ENCODE measurements at regions of chr5 and their contacts with region 1.

Region 1: DNA sequence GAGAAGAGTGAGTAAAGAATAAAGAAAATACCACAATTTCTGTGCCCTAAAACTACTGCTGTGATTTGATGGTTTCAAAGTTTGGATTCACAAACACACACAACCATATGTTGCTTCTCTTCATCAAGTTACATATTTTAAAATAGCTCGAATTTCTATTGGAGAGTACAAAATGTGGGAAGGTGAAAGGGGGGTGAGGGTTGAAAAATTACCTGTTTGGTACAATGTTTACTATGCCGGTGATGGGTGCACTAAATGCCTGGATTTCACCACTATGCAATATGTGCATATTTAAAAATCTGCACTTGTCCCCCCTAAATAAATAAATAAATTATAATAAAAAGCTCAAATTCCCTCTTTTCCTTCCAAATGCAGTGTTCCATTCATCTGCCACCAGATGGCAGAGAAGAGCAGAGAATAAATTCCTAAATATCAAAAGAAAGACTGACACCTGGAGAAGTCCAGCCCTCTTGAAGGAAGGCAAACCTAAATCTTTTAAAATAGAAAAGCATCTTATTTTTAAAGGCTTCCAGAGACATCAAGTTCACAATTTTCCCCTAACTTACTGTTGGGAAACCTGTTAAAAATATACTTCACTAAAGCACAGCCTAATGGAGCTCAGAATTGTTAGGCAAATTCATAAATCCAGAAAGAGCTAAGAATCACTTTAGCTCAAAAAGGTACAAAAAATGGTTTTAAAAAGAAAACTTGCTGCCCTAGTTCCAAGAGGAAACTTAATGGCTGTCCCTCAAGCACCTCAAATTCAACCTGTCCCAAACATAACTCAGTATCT is 24.8 kb upstream of the HNRNPA0 start:
- DNase-seq: no peak
- H3K4me3 Mint-ChIP-seq: no peak overlapping the region
- H3K27ac Mint-ChIP-seq: no peak overlapping the region
- H3K4me1 Mint-ChIP-seq: no peaks in the 10 kb centered on the region
- H3K27me3 Mint-ChIP-seq: peaks cover 1% of the 10 kb centered on the region

Region 2: GRCh38 chr5:137629646-137630045 is 149.3 kb before region 1 on chr5:
- CTCF ChIA-PET with region 1: interaction called, 10 read pairs
- POLR2A ChIA-PET with region 1: no interaction called
- intact Hi-C with region 1: no loop called
- DNase-seq: no peak
- H3K4me3 Mint-ChIP-seq: no peak overlapping the region
- H3K27ac Mint-ChIP-seq: no peak overlapping the region
- H3K4me1 Mint-ChIP-seq: no peaks in the 10 kb centered on the region
- H3K27me3 Mint-ChIP-seq: no peaks in the 10 kb centered on the region

Region 3: GRCh38 chr5:137760330-137761188 is 18.4 kb before region 1 on chr5:
- CTCF ChIA-PET with region 1: interaction called, 13 read pairs
- POLR2A ChIA-PET with region 1: no interaction called
- intact Hi-C with region 1: no loop called
- DNase-seq: no peak
- H3K4me3 Mint-ChIP-seq: no peak overlapping the region
- H3K27ac Mint-ChIP-seq: no peak overlapping the region
- H3K4me1 Mint-ChIP-seq: peaks cover 6% of the 10 kb centered on the region
- H3K27me3 Mint-ChIP-seq: peaks cover 6% of the 10 kb centered on the region

Region 4: GRCh38 chr5:137800700-137801411 is 21.9 kb after region 1 on chr5:
- CTCF ChIA-PET with region 1: interaction called, 10 read pairs
- POLR2A ChIA-PET with region 1: no interaction called
- intact Hi-C with region 1: no loop called
- DNase-seq: no peak
- H3K4me3 Mint-ChIP-seq: no peak overlapping the region
- H3K27ac Mint-ChIP-seq: no peak overlapping the region
- H3K4me1 Mint-ChIP-seq: no peaks in the 10 kb centered on the region
- H3K27me3 Mint-ChIP-seq: no peaks in the 10 kb centered on the region

Region 5: DNA sequence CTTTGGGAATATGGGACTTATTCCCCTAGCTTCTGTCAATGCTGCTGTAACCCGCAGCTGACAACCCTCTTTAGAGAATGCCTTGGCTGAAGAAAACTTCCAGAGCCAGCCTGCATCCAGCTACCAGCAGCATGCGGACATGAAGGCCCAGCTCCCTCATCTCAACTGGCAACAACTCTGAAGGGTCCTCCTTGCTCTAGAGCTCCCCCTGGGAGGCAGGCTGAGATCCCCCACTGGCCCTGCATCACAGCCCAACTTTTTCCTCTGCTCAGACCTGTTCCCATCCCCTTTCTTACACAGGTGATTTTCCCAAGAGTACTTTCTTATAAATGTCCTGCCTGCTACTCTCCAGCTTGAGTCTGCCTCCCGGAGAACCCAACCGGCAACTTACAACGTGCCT is 286.1 kb after region 1 on chr5:
- CTCF ChIA-PET with region 1: interaction called, 66 read pairs
- POLR2A ChIA-PET with region 1: no interaction called
- intact Hi-C with region 1: no loop called
- DNase-seq: peak; percentile 15
- H3K4me3 Mint-ChIP-seq: no peak overlapping the region
- H3K27ac Mint-ChIP-seq: no peak overlapping the region
- H3K4me1 Mint-ChIP-seq: peaks cover 4% of the 10 kb centered on the region
- H3K27me3 Mint-ChIP-seq: no peaks in the 10 kb centered on the region

Measured in activated CD4-positive, alpha-beta memory T cell treated with anti-CD3 and anti-CD28 coated beads for 36 hours (primary cell).